T-cell (primary cell): ENCODE measurements at regions of chr2 and their contacts with region 1.

Region 1: GRCh38 chr2:72901426-72901825 is 14.2 kb downstream of the SPR start:
- DNase-seq: no peak
- ATAC-seq: no peak
- H3K4me3 ChIP-seq: no peak overlapping the region
- H3K4me3 Mint-ChIP-seq: no peak overlapping the region
- H3K27ac ChIP-seq: no peak overlapping the region
- H3K27ac Mint-ChIP-seq: no peak overlapping the region
- H3K4me1 ChIP-seq: no peaks in the 10 kb centered on the region
- H3K4me1 Mint-ChIP-seq: no peaks in the 10 kb centered on the region
- H3K27me3 ChIP-seq: peaks cover 3 to 38% of the 10 kb centered on the region in 2 experiments
- H3K27me3 Mint-ChIP-seq: peaks cover 47 to 48% of the 10 kb centered on the region in 2 donors

Region 2: DNA sequence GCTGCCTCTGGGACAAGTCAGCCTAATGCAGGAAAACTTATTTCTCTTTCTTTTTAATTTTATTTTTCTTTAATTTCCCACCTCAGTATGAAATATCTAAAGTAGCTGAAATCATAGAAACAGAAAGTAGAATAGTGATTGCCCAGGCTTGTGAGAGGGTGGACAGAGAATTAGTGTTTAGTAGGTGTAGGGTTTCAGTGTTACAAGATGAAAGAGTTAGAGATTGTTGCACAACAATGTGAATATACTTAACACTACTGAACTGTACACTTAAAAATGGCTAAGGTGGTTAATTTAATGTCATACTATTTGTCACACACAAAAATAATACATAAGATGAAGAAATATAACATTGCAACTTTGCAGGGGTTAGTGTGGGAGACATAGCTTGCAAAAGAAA is 660.0 kb after region 1 on chr2:
- CTCF ChIA-PET with region 1: no interaction called
- POLR2A ChIA-PET with region 1: interaction called in 1 of 2 experiments, 11 read pairs
- DNase-seq: no peak
- ATAC-seq: no peak
- H3K4me3 ChIP-seq: no peak overlapping the region
- H3K4me3 Mint-ChIP-seq: no peak overlapping the region
- H3K27ac ChIP-seq: no peak overlapping the region
- H3K27ac Mint-ChIP-seq: no peak overlapping the region
- H3K4me1 ChIP-seq: no peaks in the 10 kb centered on the region
- H3K4me1 Mint-ChIP-seq: no peaks in the 10 kb centered on the region
- H3K27me3 ChIP-seq: no peaks in the 10 kb centered on the region
- H3K27me3 Mint-ChIP-seq: no peaks in the 10 kb centered on the region